Esophagus squamous epithelium (tissue), 5 donors: ENCODE measurements at regions of chr21 and their contacts with region 1.

Region 1: GRCh38 chr21:29477941-29478340 is 179.2 kb downstream of the BACH1 start:
- DNase-seq: no peak
- H3K4me3 ChIP-seq: no peak overlapping the region
- H3K27ac ChIP-seq: no peak overlapping the region
- H3K4me1 ChIP-seq: peaks cover 0 to 21% (median 0%) of the 10 kb centered on the region in 3 donors
- H3K27me3 ChIP-seq: no peaks in the 10 kb centered on the region
- CTCF ChIP-seq: no peak
- POLR2A ChIP-seq: no peak

Region 2: DNA sequence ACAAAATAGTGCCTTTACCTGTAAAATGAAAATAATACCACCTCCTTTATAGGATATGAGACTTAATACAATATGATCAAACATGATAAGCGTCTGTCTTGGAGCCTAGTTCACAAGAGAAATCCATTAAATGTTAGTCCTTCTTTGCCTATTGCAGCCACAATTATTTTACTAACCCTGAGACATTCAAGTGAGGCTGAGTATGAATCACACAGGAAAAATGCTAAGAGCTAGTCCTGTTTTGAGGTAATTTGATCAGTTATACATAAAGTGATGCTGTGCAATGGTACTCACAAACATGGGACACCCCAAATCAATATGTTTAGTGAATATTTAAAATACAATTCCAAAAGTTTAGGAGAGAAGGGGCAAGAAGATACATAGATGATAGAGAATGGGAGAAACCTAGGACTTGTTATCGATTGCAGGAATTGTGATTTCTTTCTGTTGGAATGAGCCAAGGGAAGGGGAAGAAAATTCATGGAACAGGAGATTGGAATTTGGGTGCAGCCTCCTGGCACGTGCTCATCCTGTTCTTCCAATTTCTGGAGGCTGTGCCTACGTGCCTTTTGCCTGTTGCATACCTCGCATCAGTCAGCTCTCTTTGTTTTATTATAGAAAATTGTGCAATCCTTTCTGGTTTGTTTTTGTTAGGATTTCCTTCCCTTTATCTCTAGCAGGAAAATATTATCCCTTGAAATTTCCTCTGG is 219.2 kb before region 1 on chr21:
- intact Hi-C with region 1: no loop called
- DNase-seq: no peak
- H3K4me3 ChIP-seq: no peak overlapping the region
- H3K27ac ChIP-seq: no peak overlapping the region
- H3K4me1 ChIP-seq: peaks cover 0 to 33% (median 8%) of the 10 kb centered on the region in 3 donors
- H3K27me3 ChIP-seq: no peaks in the 10 kb centered on the region
- CTCF ChIP-seq: no peak
- POLR2A ChIP-seq: no peak

Region 3: GRCh38 chr21:29843804-29844203 is 365.9 kb after region 1 on chr21:
- intact Hi-C with region 1: loop called (anchors 5 kb)
- DNase-seq: no peak
- H3K4me3 ChIP-seq: no peak overlapping the region
- H3K27ac ChIP-seq: no peak overlapping the region
- H3K4me1 ChIP-seq: no peaks in the 10 kb centered on the region
- H3K27me3 ChIP-seq: peaks cover 0 to 5% (median 0%) of the 10 kb centered on the region in 4 donors
- CTCF ChIP-seq: no peak
- POLR2A ChIP-seq: no peak